Ascending aorta (tissue), 2 donors: ENCODE measurements at regions of chr7 and their contacts with region 1.

Region 1: DNA sequence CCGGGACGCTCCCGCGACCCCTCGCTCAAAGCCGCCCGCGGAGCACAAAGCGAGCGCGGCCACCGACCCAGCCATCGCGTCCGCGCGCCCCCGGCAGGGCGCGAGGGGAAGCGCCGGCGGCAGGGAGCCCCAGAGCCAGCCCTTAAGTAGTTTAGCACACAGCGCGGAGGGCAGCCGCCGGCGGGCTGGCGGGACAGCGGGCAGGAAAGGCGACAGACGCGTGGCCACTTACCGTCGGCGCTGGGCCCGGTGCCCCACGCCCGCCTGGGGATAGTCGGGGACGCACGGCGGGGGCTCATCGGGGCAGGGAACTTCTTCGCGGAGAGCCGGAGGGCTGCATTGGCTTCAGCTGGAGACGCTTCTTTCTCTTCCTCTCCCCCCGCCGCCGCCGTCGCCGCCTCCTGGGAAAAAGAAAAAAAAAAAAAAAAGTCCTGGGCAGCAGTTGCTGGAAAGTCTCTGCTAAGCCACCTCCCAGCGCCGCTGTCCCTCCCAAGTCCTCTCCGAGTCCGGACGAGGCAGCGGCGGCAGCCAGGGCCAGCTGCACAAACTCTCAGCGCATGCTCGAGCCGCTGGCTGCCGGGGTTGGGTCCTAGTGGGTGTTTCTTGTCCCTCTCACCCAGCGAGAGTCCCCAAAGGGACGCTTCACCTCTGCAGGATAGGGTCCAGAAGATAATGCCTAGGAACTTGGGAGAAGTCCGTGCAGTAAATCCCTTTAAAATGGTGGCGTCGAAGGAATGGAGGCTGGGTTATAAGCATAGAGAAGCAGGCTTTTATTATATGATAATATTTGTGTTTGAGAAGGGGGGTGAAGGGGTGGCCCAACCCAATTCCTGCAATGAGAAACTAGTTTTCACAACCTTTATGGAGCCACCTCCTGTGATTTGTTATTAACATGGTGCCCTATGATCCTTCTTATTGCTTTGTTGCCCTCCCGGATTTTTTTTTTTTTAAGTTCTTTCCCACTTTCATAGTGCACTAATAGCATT is at the start of gene TSPAN12:
- DNase-seq: peak; percentile 32 to 90
- H3K4me3 ChIP-seq: peak within 1 kb of the TSS; percentile 66 to 67
- H3K27ac ChIP-seq: peak within 1 kb of the TSS; percentile 90 to 96
- H3K4me1 ChIP-seq: peaks cover 0 to 2% of the 10 kb centered on the region in 2 donors
- H3K27me3 ChIP-seq: no peaks in the 10 kb centered on the region
- CTCF ChIP-seq: peak; percentile 60 to 89 (median 70)
- total RNA-seq, gene TSPAN12: 28.9 TPM

Region 2: DNA sequence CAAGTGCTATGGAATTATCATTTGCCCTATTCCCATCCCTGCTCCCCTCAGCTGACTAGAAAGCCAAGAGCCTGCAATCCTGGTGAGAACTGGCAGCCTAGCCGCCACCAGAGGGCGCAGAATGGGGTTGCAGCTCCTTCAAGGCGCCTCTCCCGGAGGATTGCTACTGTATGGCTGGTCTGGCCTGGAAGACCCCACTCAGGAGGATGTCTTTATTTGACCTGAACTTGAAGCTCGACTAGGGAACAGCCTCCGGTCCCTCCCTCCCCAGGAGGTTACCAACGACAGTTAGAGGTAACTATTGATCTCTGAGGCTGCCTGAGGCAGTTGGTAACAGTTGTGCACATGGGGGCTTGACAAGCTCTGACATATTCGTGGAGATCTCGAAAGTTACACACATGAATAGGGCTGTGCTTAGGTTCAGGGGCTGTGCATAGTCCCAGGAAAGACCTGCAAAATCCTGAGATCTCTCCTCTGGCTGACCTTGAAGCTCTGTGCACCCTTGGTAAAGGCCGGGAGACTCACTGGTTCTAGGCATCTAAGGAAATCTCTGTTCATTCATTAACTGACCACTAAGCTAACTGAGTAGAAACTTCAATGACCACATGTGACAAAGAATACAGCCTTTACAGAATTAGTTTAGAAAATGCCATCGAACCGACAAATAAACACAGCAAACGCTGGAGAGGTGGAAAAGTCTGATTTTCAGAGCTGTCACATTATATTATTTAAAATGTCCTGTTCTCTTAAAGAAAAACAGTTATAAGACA is 65.6 kb before region 1 on chr7:
- intact Hi-C with region 1: loop called (anchors 5 kb)
- DNase-seq: peak in 1 of 2 donors; percentile 75
- H3K4me3 ChIP-seq: no peak overlapping the region
- H3K27ac ChIP-seq: no peak overlapping the region
- H3K4me1 ChIP-seq: no peaks in the 10 kb centered on the region
- H3K27me3 ChIP-seq: no peaks in the 10 kb centered on the region
- CTCF ChIP-seq: peak; percentile 37 to 84 (median 81)

Region 3: GRCh38 chr7:120805636-120806388 is 52.1 kb before region 1 on chr7:
- intact Hi-C with region 1: loop called (anchors 2 kb)
- DNase-seq: peak in 1 of 2 donors; percentile 67
- H3K4me3 ChIP-seq: no peak overlapping the region
- H3K27ac ChIP-seq: peak overlapping the region in 1 of 2 donors; percentile 6
- H3K4me1 ChIP-seq: peaks cover 0 to 5% of the 10 kb centered on the region in 2 donors
- H3K27me3 ChIP-seq: no peaks in the 10 kb centered on the region
- CTCF ChIP-seq: peak; percentile 62 to 83 (median 78)

Region 4: GRCh38 chr7:120916121-120916520 is 58.2 kb after region 1 on chr7:
- intact Hi-C with region 1: no loop called
- DNase-seq: no peak
- H3K4me3 ChIP-seq: no peak overlapping the region
- H3K27ac ChIP-seq: no peak overlapping the region
- H3K4me1 ChIP-seq: no peaks in the 10 kb centered on the region
- H3K27me3 ChIP-seq: no peaks in the 10 kb centered on the region
- CTCF ChIP-seq: no peak

Region 5: GRCh38 chr7:120950539-120951308 is 92.8 kb after region 1 on chr7 and contains the start of gene ING3:
- intact Hi-C with region 1: loop called (anchors 1 kb)
- DNase-seq: peak; percentile 94 to 99
- H3K4me3 ChIP-seq: peak within 1 kb of the TSS; percentile 73 to 77
- H3K27ac ChIP-seq: peak within 1 kb of the TSS; percentile 91 to 99
- H3K4me1 ChIP-seq: peaks cover 5 to 12% of the 10 kb centered on the region in 2 donors
- H3K27me3 ChIP-seq: no peaks in the 10 kb centered on the region
- CTCF ChIP-seq: no peak
- total RNA-seq, gene ING3: 6.8 TPM

Region 6: GRCh38 chr7:121081327-121081936 is 223.6 kb after region 1 on chr7:
- intact Hi-C with region 1: loop called (anchors 5 kb)
- DNase-seq: no peak
- H3K4me3 ChIP-seq: no peak overlapping the region
- H3K27ac ChIP-seq: peak overlapping the region in 1 of 2 donors; percentile 28
- H3K4me1 ChIP-seq: peaks cover 6 to 69% of the 10 kb centered on the region in 2 donors
- H3K27me3 ChIP-seq: no peaks in the 10 kb centered on the region
- CTCF ChIP-seq: peak; percentile 62 to 82 (median 80)

Region 7: DNA sequence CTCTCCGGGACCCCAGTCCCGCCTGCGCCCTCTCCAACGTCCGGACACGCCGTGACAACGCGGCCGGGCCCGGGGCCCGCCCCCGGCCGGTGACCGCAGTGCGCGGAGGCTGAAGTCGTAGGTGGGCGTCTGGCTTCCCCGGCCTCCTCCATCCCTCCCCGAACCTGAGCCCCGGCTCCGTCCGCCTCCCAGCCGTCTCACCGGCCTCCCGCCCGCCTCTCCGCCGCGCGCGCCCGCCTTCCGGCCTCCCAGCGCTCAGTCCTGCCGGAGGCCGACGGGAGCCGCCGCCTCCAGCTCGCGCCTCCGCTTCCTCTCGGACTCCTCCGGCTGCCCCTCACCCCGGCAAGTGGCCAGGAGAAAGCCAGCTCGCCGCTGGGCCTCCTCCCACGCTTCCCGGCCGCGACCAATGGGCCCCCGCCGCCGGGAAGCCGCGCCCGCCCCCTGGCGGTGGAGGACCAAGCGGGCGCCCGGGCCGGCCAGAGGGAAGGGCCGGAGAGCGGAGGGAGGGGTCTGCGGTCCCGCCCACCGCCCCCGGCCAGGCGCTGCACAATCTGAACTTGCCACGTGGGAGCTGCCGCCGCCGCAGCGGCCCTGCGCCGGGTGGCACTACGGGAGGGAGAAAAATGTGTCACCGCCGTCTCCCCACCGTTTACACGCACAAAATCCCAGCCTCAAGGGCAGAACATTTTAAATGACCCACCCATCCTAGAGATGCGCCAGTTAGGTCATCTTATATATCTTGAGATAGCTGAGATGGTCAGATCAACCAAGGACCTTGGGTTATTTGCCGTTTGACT is 538.3 kb after region 1 on chr7 and contains the start of gene FAM3C:
- intact Hi-C with region 1: loop called (anchors 5 kb)
- DNase-seq: peak; percentile 75 to 95
- H3K4me3 ChIP-seq: peak within 1 kb of the TSS; percentile 93 to 100
- H3K27ac ChIP-seq: peak within 1 kb of the TSS; percentile 85 to 91
- H3K4me1 ChIP-seq: no peaks in the 10 kb centered on the region
- H3K27me3 ChIP-seq: no peaks in the 10 kb centered on the region
- CTCF ChIP-seq: peak; percentile 83 to 96 (median 92)
- total RNA-seq, gene FAM3C: 27.6 TPM